ENCODE measurements at regions of chr22 and their contacts with region 1.

Region 1: DNA sequence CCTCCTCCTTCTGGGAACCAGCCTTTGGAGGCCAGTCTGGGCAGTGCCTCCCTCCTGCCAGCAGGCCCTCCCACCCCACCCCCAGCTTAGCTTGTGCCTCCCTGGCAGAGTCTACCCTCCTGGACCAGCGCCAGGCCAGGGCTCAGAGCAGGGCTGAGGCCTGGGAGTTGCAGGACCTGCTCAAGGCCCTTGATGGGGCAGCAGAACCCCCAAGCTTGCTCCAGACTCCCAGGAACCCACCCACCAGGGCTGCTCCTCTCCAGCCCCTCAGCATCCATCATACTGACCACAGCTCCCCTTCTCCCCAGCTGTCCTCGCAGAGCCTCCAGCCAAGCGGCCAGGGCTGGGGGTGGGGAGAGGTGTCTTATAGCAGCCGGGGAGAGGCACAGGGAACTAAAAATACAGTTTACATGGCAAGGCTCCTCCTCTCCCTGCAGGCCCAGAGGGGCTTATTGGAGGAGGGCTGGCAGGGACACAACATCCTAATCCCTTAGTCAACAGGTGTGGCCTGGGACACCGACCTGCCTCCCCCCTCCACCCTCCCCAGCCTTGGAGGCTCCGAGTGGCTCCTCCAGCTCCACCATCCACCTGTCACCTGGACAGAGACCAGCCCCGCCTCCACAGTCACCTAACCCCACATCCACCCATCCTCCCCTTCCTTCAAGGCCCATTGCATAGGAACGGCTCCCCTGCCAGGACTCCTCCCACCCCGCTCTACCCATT is 5.2 kb upstream of the MB start:
- DNase-seq: peak; percentile 63 to 74
- ATAC-seq: peak; percentile 37 to 72 (median 64)
- H3K4me3 ChIP-seq: peak overlapping the region in 4 of 10 donors; percentile 4 to 24 (median 18)
- H3K27ac ChIP-seq: peak overlapping the region; percentile 73 to 94 (median 84)
- H3K4me1 ChIP-seq: peaks cover 0 to 69% (median 36%) of the 10 kb centered on the region in 9 donors
- H3K27me3 ChIP-seq: no peaks in the 10 kb centered on the region
- CTCF ChIP-seq: no peak

Region 2: DNA sequence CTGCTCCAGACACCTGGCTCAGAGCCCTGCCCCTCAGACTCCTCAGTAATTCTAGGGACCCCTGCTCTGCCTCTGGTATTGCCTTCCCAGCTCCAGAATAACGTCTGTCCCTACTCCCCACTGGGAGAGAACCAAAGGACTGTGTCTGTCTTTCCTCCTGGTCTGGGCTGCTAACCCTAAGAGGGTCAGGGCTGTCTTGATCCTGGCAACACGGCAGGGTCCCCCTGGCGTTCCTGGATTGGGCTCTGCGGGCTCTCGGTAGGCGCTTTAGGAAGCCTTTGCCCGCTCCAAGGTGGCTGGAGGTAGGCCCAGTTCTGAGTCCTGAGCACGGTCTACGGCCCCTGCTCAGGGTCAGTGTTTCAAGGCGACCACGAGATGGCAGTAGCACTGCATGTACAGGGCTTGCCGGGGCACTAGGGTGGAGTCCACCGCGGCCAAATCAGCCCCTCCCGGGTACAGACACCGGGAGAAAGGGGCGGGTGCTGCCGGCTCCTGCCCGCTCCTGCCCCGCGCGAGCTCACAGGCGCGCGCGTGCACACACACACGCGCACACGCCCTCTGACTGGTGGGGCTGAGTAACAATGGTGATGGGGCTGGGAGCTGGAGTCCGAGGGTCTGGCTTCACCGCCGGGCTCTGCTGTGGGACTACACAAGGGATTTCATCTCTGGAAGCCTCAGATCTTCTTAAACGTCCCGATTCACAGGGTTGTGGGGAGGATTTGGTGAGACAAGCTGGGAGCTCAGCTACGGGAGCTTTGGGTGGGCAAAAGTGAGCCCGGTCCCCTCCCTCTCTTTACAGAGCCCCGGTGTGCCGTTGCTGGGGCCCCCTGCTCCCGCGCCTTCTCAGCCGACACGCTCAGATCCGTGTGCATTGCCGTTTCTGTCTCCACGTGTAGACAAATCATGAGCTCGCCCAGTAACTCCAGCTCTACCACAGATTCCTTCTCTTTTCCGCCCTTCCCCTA is 271.5 kb before region 1 on chr22:
- intact Hi-C with region 1: loop called in 5 of 10 experiments (anchors 1 to 5 kb)
- DNase-seq: peak; percentile 92 to 93
- ATAC-seq: peak; percentile 85 to 92 (median 90)
- H3K4me3 ChIP-seq: peak overlapping the region in 9 of 10 donors; percentile 39 to 65 (median 61)
- H3K27ac ChIP-seq: peak overlapping the region in 8 of 10 donors; percentile 53 to 90 (median 73)
- H3K4me1 ChIP-seq: peaks cover 0 to 48% (median 13%) of the 10 kb centered on the region in 9 donors
- H3K27me3 ChIP-seq: no peaks in the 10 kb centered on the region
- CTCF ChIP-seq: peak; percentile 75 to 97 (median 94)

Region 3: GRCh38 chr22:35430897-35431322 is 191.4 kb before region 1 on chr22:
- intact Hi-C with region 1: loop called in 6 of 10 experiments (anchors 1 to 5 kb)
- DNase-seq: peak; percentile 90 to 91
- ATAC-seq: peak; percentile 94 to 99 (median 98)
- H3K4me3 ChIP-seq: no peak overlapping the region
- H3K27ac ChIP-seq: peak overlapping the region in 5 of 10 donors; percentile 14 to 69 (median 48)
- H3K4me1 ChIP-seq: peaks cover 0 to 14% (median 8%) of the 10 kb centered on the region in 9 donors
- H3K27me3 ChIP-seq: no peaks in the 10 kb centered on the region
- CTCF ChIP-seq: peak; percentile 94 to 99 (median 97)

Region 4: GRCh38 chr22:35589071-35589952 is 33.0 kb before region 1 on chr22:
- intact Hi-C with region 1: loop called in 5 of 10 experiments (anchors 1 to 5 kb)
- DNase-seq: no peak
- ATAC-seq: peak in 4 of 8 donors; percentile 4 to 41 (median 10)
- H3K4me3 ChIP-seq: no peak overlapping the region
- H3K27ac ChIP-seq: peak overlapping the region in 9 of 10 donors; percentile 65 to 90 (median 84)
- H3K4me1 ChIP-seq: peaks cover 7 to 81% (median 43%) of the 10 kb centered on the region in 9 donors
- H3K27me3 ChIP-seq: no peaks in the 10 kb centered on the region
- CTCF ChIP-seq: no peak